ENCODE measurements at regions of chr12 and their contacts with region 1.

Region 1: DNA sequence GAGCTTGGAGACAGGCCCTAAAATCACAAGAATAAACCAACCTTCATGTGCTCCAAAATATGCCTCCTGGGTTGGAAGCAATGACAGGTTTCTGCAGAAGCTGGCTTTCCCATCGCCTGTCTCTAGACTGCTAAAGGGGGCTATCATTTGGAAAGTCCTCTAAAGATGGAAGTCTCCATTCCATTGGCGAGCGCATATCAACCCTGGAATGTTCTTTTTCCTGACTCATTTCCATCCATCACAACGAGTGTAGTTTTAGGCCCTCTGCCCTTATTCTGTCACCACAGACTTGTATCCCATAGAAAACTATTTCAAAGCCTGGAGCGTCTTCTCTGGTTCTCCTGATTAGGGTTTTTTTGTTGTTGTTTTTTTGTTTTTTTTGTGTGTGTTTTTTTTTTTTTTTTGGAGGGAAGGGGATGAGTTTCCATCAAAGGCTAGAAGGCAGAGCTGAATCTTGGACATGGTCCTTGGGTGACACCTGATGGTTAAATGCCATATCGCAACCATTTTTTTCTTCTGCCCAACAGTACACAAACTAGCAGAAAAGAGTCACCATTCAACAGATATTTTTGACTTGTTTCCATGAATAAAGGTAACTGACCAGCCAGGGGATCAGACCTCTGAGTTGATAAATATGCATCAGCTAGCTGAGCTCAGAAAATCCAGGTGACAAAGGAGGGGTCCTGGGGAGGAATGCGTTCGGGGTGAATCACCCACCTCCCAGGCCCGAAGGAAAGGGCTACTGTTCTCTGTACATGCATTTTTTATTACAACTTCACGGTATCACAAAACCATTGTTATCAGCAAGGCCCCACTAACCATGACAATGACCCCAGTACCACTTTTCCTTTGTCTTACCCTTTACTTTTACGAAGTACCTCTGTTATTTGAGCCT is 40.5 kb downstream of the KCNA5 start:
- DNase-seq: no peak
- ATAC-seq: peak; percentile 42 to 65

Region 2: GRCh38 chr12:4857472-4858291 is 226.5 kb before region 1 on chr12:
- intact Hi-C with region 1: loop called (anchors 5 kb)
- DNase-seq: peak; percentile 77
- ATAC-seq: peak; percentile 81 to 88

Region 3: DNA sequence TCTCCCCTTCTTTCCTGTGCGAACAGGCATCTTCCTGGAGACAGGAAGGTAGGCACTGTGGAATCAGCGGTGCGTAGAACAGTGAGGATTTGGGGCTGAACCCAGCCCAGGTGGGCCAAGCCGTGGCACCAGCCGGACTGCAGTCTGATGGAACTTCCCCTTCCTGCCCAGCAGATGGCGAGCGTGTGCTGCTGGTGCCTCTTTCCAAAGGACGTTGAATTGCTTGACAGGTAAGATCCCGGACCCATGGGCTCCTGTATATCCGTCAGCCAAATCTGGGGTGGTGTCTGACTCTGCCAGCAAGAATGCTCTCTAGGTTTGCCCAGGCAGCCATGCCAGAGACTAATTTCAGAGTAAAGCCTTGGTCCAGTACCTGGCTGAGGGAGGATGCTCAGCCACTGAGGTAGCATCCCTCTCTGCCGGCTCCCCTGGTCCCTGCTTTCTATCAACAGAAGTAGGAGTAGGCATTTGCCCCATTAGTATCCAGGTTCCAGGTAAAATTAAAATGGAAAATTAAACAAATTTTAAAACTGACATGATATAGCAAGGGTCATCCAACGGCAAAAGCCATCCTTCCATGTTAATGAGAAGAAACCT is 61.6 kb before region 1 on chr12:
- intact Hi-C with region 1: loop called (anchors 1 to 2 kb)
- DNase-seq: peak; percentile 48
- ATAC-seq: peak; percentile 53 to 69

Region 4: DNA sequence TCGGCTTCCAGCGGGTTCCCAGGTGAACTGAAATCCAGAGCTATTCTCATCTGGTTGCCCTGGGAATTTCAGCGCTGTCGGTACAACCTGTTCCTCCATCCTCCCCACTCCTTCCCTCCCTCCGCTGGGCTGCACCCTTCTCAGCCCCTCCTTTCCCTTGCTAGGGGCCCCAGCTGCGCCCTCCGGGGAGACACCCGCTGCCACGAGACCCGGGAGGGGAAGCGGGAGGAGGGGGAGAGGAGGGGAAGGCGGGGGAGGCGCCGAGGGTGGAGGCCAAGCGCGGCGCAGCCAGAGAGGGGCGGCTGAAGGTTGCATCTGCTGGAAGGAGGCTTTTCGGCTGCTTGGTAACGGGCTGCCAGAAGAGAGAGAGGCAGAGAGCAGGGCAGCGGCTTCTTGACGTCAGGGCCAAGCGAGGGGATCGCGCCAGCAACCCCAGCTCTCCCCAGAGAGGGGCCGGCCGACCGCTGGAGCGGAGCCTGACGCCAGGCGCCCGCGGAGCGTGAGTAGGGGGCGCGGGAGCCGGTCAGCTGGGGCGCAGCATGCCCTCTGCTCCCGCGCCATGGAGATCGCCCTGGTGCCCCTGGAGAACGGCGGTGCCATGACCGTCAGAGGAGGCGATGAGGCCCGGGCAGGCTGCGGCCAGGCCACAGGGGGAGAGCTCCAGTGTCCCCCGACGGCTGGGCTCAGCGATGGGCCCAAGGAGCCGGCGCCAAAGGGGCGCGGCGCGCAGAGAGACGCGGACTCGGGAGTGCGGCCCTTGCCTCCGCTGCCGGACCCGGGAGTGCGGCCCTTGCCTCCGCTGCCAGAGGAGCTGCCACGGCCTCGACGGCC is 40.4 kb before region 1 on chr12 and contains the start of gene KCNA5:
- intact Hi-C with region 1: loop called in 1 of 2 experiments (anchors 5 kb)
- DNase-seq: peak; percentile 60
- ATAC-seq: peak; percentile 65 to 77
- total RNA-seq, gene KCNA5: 70.3 to 94.8 TPM